Naive thymus-derived CD4-positive, alpha-beta T cell (primary cell): ENCODE measurements at regions of chr16 and their contacts with region 1.

Region 1: DNA sequence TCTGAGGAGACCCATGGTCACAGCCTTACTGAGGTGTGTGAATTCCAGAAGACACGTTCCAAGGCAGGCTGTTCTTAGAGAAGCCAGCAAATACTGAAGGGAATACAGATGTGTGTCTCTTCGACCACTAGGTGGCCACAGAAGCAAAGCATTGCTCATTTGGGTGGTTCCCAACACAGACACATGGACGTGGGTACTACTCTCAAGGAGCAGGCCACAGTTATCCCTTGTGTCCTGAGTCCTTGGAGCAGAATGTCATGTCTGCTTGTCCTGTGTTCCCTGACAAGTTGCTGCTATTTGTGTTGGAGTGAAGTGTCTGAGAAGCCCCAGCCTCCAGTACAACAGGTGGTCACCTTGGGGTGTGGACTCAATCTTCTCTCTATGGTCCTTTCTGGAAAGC is 30.3 kb downstream of the HMOX2 start:
- DNase-seq: peak in 8 of 9 donors; percentile 40 to 75 (median 65)
- ATAC-seq: peak; percentile 58
- H3K4me3 ChIP-seq: peak overlapping the region; percentile 55
- H3K4me3 Mint-ChIP-seq: peak overlapping the region; percentile 71 to 87 (median 80)
- H3K27ac ChIP-seq: peak overlapping the region; percentile 93
- H3K27ac Mint-ChIP-seq: peak overlapping the region; percentile 94 to 100 (median 99)
- H3K4me1 ChIP-seq: peaks cover 40 to 58% of the 10 kb centered on the region in 2 donors
- H3K4me1 Mint-ChIP-seq: peaks cover 39 to 77% (median 60%) of the 10 kb centered on the region in 7 donors
- H3K27me3 ChIP-seq: no peaks in the 10 kb centered on the region
- H3K27me3 Mint-ChIP-seq: no peaks in the 10 kb centered on the region

Region 2: DNA sequence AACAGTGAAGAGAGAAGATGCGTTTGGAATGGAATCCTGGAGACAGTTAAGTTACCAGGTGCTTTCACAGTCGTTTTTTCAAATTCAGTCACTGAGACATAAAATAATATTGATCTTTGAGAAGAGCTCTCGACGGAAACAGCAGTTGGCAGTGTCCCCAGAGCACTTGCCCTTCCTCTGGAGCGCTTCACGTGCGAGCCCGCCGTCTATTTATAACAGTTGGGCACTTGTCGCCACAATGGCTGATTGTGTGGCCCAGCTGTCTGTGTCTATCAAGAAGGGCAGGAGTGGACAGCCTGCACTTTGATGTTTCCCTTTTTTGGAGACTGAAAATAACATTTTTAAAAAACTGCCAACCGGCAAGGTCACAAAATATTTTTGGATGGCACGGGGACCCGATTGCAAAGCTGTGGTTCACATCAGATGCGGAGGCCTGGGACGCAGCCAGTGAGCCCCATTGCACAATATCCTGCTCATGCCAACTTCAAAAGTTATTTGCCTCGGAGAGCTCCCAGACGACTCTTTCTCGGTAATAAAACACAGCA is 453.1 kb before region 1 on chr16:
- CTCF ChIA-PET with region 1: no interaction called
- POLR2A ChIA-PET with region 1: no interaction called
- intact Hi-C with region 1: no loop called
- DNase-seq: no peak
- ATAC-seq: peak; percentile 32
- H3K4me3 ChIP-seq: no peak overlapping the region
- H3K4me3 Mint-ChIP-seq: peak overlapping the region in 2 of 10 donors; percentile 26 to 29
- H3K27ac ChIP-seq: no peak overlapping the region
- H3K27ac Mint-ChIP-seq: peak overlapping the region in 1 of 9 donors; percentile 26
- H3K4me1 ChIP-seq: no peaks in the 10 kb centered on the region
- H3K4me1 Mint-ChIP-seq: peaks cover 0 to 15% (median 4%) of the 10 kb centered on the region in 7 donors
- H3K27me3 ChIP-seq: no peaks in the 10 kb centered on the region
- H3K27me3 Mint-ChIP-seq: no peaks in the 10 kb centered on the region

Region 3: DNA sequence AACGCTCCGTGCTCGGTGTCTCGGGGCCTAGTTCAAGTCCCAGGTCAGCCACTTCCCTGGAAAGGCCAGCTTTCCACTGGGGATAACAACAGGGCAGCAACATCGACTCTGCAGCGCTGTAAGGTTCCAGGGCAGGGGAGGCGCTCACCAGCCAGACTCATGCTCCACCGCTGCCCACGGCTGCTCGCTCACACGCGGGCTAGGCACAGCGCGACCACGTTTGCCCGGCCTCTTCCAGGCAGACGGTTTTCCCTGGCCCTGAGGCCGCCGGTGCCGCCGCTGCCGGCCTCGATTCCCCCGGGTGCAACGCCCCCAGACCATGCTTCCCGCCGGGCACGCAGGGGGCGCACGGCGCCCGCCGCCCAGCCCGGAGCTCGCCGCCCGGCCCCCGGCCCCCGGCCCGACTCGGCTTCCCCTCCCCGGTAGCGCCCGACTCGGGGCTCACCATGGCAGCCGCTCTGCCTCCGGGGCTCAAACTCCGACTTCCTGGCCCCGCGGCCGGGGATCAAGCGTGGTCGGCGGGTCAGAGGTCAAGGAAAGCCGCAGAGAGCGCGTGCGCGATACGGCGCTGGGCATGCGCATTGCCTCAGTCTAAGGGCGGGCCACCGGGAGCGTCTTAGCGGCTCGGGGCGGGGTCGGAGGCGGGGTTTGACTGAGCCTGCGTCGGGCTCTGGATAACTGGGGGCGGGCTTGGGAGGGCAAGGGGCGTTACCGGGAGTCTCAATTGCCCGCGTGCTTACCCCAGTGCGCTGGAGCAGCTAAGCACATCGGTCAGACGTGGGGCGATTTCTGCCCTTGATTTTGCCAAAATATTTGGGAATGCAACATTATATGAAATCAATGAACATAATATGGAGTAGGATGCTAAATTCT is 155.4 kb before region 1 on chr16 and contains the start of gene PAM16:
- CTCF ChIA-PET with region 1: no interaction called
- POLR2A ChIA-PET with region 1: no interaction called
- intact Hi-C with region 1: loop called in 1 of 2 experiments (anchors 1 kb)
- DNase-seq: peak; percentile 95 to 99 (median 98)
- ATAC-seq: peak; percentile 93
- H3K4me3 ChIP-seq: peak within 1 kb of the TSS; percentile 91
- H3K4me3 Mint-ChIP-seq: peak within 1 kb of the TSS; percentile 90 to 98 (median 94)
- H3K27ac ChIP-seq: peak within 1 kb of the TSS; percentile 87
- H3K27ac Mint-ChIP-seq: peak within 1 kb of the TSS; percentile 76 to 95 (median 92)
- H3K4me1 ChIP-seq: peaks cover 5 to 7% of the 10 kb centered on the region in 2 donors
- H3K4me1 Mint-ChIP-seq: peaks cover 11 to 38% (median 32%) of the 10 kb centered on the region in 7 donors
- H3K27me3 ChIP-seq: no peaks in the 10 kb centered on the region
- H3K27me3 Mint-ChIP-seq: no peaks in the 10 kb centered on the region
- total RNA-seq, gene PAM16: 34.1 to 46.2 (median 45.0) TPM

Region 4: GRCh38 chr16:4487955-4488498 is 18.4 kb before region 1 on chr16:
- CTCF ChIA-PET with region 1: interaction called, 29 read pairs
- POLR2A ChIA-PET with region 1: interaction called, 169 read pairs
- intact Hi-C with region 1: loop called (anchors 1 kb)
- DNase-seq: peak in 5 of 9 donors; percentile 26 to 59 (median 40)
- ATAC-seq: peak; percentile 58
- H3K4me3 ChIP-seq: peak overlapping the region; percentile 32
- H3K4me3 Mint-ChIP-seq: peak overlapping the region; percentile 62 to 87 (median 81)
- H3K27ac ChIP-seq: peak overlapping the region; percentile 69
- H3K27ac Mint-ChIP-seq: peak overlapping the region; percentile 92 to 98 (median 96)
- H3K4me1 ChIP-seq: peaks cover 55 to 68% of the 10 kb centered on the region in 2 donors
- H3K4me1 Mint-ChIP-seq: peaks cover 43 to 72% (median 57%) of the 10 kb centered on the region in 7 donors
- H3K27me3 ChIP-seq: no peaks in the 10 kb centered on the region
- H3K27me3 Mint-ChIP-seq: no peaks in the 10 kb centered on the region

Region 5: GRCh38 chr16:4517812-4518680 is 11.6 kb after region 1 on chr16:
- CTCF ChIA-PET with region 1: interaction called, 15 read pairs
- POLR2A ChIA-PET with region 1: interaction called, 9 read pairs
- intact Hi-C with region 1: no loop called
- DNase-seq: no peak
- ATAC-seq: no peak
- H3K4me3 ChIP-seq: no peak overlapping the region
- H3K4me3 Mint-ChIP-seq: no peak overlapping the region
- H3K27ac ChIP-seq: no peak overlapping the region
- H3K27ac Mint-ChIP-seq: peak overlapping the region; percentile 8 to 74 (median 63)
- H3K4me1 ChIP-seq: peaks cover 24 to 30% of the 10 kb centered on the region in 2 donors
- H3K4me1 Mint-ChIP-seq: peaks cover 29 to 68% (median 46%) of the 10 kb centered on the region in 7 donors
- H3K27me3 ChIP-seq: no peaks in the 10 kb centered on the region
- H3K27me3 Mint-ChIP-seq: no peaks in the 10 kb centered on the region

Region 6: DNA sequence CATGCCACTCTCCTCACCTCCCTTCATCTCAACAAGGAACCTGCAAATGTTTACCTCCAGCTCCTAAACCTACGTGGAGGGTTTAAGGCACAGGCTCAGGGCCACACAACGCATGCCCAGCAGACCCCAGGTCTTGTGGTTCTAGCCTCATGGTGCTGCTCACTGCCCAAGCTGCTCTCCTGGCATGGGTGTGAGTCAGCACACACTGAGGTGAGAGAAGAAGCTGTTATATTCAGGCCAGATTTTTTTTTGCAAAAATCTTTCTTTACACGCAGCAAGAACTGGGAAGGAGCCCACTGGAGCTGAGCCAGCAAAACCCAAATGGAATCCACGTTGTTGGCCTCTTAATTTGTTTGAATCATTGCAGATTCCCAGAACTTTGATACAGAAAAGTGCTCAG is 44.1 kb after region 1 on chr16:
- CTCF ChIA-PET with region 1: interaction called, 42 read pairs
- POLR2A ChIA-PET with region 1: interaction called, 6 read pairs
- intact Hi-C with region 1: loop called (anchors 1 kb)
- DNase-seq: no peak
- ATAC-seq: no peak
- H3K4me3 ChIP-seq: no peak overlapping the region
- H3K4me3 Mint-ChIP-seq: no peak overlapping the region
- H3K27ac ChIP-seq: no peak overlapping the region
- H3K27ac Mint-ChIP-seq: peak overlapping the region in 1 of 9 donors; percentile 36
- H3K4me1 ChIP-seq: peaks cover 0 to 7% of the 10 kb centered on the region in 2 donors
- H3K4me1 Mint-ChIP-seq: peaks cover 0 to 10% (median 5%) of the 10 kb centered on the region in 7 donors
- H3K27me3 ChIP-seq: no peaks in the 10 kb centered on the region
- H3K27me3 Mint-ChIP-seq: peaks cover 0 to 6% (median 0%) of the 10 kb centered on the region in 5 donors

Region 7: DNA sequence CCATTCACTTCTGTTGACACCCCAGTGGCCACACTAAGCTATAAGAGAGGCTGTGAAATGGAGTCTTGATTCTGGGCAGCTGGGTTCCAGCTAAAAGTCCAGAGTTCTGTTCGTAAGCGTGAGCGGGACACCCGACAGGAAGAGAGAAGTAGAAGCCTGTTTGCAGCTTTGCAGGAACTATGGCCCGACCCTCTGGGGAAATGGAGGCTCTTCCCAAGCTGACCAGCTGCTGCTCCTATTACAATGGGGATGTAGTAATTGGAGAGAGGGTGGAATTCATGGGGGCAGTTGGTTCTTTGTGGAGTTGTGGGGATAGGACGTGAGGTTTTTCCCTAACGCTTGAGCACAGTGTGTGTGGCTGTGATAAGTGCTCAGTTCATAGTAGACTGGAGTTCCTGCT is 79.8 kb after region 1 on chr16:
- CTCF ChIA-PET with region 1: interaction called, 24 read pairs
- POLR2A ChIA-PET with region 1: interaction called, 4 read pairs
- intact Hi-C with region 1: loop called (anchors 1 kb)
- DNase-seq: no peak
- ATAC-seq: no peak
- H3K4me3 ChIP-seq: no peak overlapping the region
- H3K4me3 Mint-ChIP-seq: no peak overlapping the region
- H3K27ac ChIP-seq: no peak overlapping the region
- H3K27ac Mint-ChIP-seq: no peak overlapping the region
- H3K4me1 ChIP-seq: no peaks in the 10 kb centered on the region
- H3K4me1 Mint-ChIP-seq: peaks cover 0 to 4% (median 0%) of the 10 kb centered on the region in 7 donors
- H3K27me3 ChIP-seq: no peaks in the 10 kb centered on the region
- H3K27me3 Mint-ChIP-seq: peaks cover 0 to 27% (median 5%) of the 10 kb centered on the region in 5 donors